Activated T-helper 1 cell treated with anti-CD3 and anti-CD28 coated beads, Interleukin-12 subunit alpha, Interleukin-12 subunit beta, Interleukin-2, Interleukin-4 antibody, amounts not matched to agents 30 ng/mL and 10 ng/mL and 1 ng/mL, durations not matched to agents 14 hours and 24 hours and 36 hours (primary cell): ENCODE measurements at regions of chr12 and their contacts with region 1.

Region 1: DNA sequence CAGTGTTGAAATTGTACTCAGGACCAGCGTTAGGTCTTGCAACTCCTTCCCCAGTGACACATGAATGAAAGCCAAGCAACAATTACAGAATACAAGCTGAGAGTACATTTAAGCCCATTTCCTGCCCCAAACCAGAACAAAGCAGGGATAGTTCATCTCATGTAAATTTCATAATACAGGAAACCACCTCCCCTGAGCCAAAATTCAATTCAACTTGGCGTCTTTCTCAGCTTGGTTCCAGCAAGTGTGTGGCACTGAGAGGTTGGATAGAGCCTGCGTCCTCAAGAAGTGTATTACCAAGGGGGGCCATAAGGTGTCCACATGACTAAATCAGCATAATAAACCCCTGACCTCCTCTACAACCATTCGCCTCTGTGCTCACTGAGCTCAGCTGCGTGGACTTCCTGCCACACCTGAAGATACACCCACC is 278.9 kb upstream of the CRY1 start:
- DNase-seq: peak; percentile 42
- H3K4me3 Mint-ChIP-seq: peak overlapping the region; percentile 52
- H3K27ac Mint-ChIP-seq: peak overlapping the region; percentile 87
- H3K4me1 Mint-ChIP-seq: peaks cover 75% of the 10 kb centered on the region
- H3K27me3 Mint-ChIP-seq: no peaks in the 10 kb centered on the region

Region 2: DNA sequence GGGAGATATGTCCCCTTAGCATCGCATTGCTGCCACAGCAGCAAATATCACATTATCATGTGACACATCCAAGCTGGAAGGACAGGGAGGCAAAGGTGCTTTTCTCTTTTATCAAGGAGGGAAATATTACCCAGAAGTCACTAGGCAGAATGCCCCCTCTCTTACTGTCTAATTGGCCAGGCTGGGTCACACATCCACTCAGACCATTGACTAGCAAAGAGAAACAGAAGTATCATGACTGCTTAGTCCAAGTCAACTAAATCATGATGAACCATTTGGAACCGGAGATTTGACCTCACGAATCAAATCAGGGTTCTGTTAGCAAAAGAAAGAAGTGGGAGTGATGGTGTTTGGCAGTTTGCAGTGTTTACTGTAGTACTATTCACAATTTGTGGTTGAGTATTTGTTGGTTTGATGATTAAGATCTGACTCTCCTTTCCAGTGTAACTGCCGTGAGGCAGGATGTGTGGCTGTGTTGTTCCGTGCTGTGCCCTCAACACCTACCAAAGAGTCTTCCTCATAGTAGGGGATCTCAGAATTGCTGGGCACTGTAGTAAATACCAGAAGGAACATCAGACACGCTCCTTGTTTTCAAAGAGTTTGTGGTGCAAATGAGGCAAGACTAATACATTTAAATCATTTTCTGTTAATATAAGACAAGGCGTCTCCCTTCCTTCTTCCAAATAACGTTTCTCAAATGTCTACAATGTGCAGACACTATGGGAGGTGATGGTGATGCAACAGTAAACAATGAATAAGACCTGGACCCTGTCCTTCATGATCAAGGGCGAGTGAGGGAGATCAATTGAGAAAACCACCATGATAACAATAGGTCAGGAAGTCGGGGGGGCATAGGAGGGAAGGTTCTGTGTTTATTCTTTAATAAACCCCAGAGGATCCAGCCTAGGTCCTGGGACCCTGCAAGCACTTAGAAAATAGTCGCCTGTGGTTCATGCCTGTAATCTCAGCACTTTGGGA is 84.5 kb before region 1 on chr12:
- intact Hi-C with region 1: loop called (anchors 1 kb)
- DNase-seq: peak; percentile 42
- H3K4me3 Mint-ChIP-seq: peak overlapping the region; percentile 44
- H3K27ac Mint-ChIP-seq: peak overlapping the region; percentile 82
- H3K4me1 Mint-ChIP-seq: peaks cover 12% of the 10 kb centered on the region
- H3K27me3 Mint-ChIP-seq: peaks cover 3% of the 10 kb centered on the region

Region 3: DNA sequence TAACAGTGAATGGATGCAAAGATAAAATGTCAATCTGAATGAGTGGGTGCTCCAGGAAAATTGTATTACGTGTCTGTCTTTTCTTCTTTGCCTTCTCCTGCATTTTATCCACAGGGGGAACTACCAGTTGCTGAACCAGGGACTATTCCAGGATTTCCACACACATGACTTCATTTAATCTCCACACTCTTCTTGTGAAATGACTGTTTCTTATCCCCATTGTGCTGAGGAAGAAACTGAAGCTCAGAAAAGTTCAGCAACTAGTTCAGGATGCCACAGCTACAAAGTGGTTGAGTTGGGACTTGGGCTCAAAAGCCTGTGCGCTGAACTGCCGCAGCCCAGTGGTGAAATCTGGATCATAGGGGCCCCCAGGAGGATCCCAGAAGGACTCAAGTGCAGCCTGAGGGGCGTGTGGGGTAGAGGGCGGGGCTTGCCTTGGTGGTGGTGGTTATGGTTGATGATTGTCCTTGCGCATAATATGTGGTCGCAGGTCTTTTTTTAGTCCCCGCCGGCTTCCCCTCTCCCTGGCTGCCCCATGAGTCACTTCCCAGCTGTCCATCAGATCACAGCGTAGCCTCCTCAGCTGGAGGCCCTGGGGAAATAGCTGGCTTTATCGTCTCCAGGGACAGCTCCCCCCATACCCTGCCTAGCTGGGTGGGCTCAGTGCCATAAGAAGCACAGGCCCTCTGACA is 43.7 kb before region 1 on chr12:
- intact Hi-C with region 1: loop called (anchors 1 kb)
- DNase-seq: no peak
- H3K4me3 Mint-ChIP-seq: no peak overlapping the region
- H3K27ac Mint-ChIP-seq: no peak overlapping the region
- H3K4me1 Mint-ChIP-seq: peaks cover 83% of the 10 kb centered on the region
- H3K27me3 Mint-ChIP-seq: no peaks in the 10 kb centered on the region

Region 4: GRCh38 chr12:107356266-107356936 is 15.8 kb before region 1 on chr12:
- intact Hi-C with region 1: loop called (anchors 1 kb)
- DNase-seq: no peak
- H3K4me3 Mint-ChIP-seq: peak overlapping the region; percentile 19
- H3K27ac Mint-ChIP-seq: no peak overlapping the region
- H3K4me1 Mint-ChIP-seq: peaks cover 74% of the 10 kb centered on the region
- H3K27me3 Mint-ChIP-seq: peaks cover 2% of the 10 kb centered on the region

Region 5: GRCh38 chr12:107390414-107390813 is 18.2 kb after region 1 on chr12:
- intact Hi-C with region 1: loop called (anchors 2 kb)
- DNase-seq: no peak
- H3K4me3 Mint-ChIP-seq: no peak overlapping the region
- H3K27ac Mint-ChIP-seq: peak overlapping the region; percentile 32
- H3K4me1 Mint-ChIP-seq: peaks cover 75% of the 10 kb centered on the region
- H3K27me3 Mint-ChIP-seq: peaks cover 2% of the 10 kb centered on the region